Naive thymus-derived CD8-positive, alpha-beta T cell (primary cell): ENCODE measurements at regions of chr7 and their contacts with region 1.

Region 1: GRCh38 chr7:150481186-150481920 is 30.9 kb downstream of the GIMAP8 start:
- DNase-seq: peak; percentile 25 to 76 (median 63)
- ATAC-seq: peak; percentile 51 to 69
- H3K4me3 Mint-ChIP-seq: peak overlapping the region; percentile 71 to 97 (median 88)
- H3K27ac Mint-ChIP-seq: peak overlapping the region; percentile 98 to 100 (median 100)
- H3K4me1 Mint-ChIP-seq: peaks cover 57 to 98% (median 94%) of the 10 kb centered on the region in 4 donors
- H3K27me3 Mint-ChIP-seq: no peaks in the 10 kb centered on the region

Region 2: DNA sequence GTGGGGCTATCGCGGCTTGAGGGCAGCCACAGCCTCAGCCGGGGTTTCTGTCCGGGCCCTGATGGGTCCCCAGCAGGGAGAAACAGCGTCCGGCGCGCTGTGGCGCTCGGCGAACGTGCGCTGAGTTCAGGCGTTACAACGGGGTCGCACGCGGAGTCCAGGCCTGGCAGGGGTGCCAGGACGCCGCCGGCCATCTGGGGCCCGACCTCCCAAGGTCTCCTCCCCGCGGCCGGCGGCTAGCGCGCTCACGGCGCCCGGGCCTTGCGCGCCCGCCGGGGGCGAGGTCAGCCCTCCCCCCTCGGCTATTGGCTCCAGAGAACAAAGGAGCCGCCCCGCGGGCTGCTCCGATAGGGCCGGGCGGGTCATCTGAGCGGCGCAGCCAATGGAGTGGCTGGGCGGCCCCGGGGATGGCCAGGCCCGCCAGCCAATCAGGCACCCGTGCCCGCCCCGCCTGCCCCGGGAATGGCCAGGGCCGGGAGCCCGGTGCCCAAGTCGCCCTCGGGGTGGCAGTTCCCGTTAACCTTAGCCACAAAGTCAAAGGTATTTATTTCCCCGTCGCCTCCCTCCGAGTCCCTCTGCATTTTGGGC is 102.4 kb before region 1 on chr7 and contains the start of gene ZNF775:
- POLR2A ChIA-PET with region 1: no interaction called
- DNase-seq: peak; percentile 88 to 94 (median 91)
- ATAC-seq: peak; percentile 93 to 96
- H3K4me3 Mint-ChIP-seq: peak within 1 kb of the TSS; percentile 82 to 95 (median 90)
- H3K27ac Mint-ChIP-seq: peak within 1 kb of the TSS; percentile 85 to 93 (median 90)
- H3K4me1 Mint-ChIP-seq: peaks cover 27 to 65% (median 60%) of the 10 kb centered on the region in 4 donors
- H3K27me3 Mint-ChIP-seq: no peaks in the 10 kb centered on the region
- polyA plus RNA-seq, gene ZNF775: 1.5 to 7.6 (median 3.1) TPM

Region 3: GRCh38 chr7:150404805-150405583 is 76.4 kb before region 1 on chr7:
- POLR2A ChIA-PET with region 1: no interaction called
- DNase-seq: peak; percentile 62 to 82 (median 72)
- ATAC-seq: peak; percentile 80 to 81
- H3K4me3 Mint-ChIP-seq: peak overlapping the region; percentile 90 to 98 (median 98)
- H3K27ac Mint-ChIP-seq: peak overlapping the region; percentile 89 to 99 (median 98)
- H3K4me1 Mint-ChIP-seq: peaks cover 25 to 58% (median 41%) of the 10 kb centered on the region in 4 donors
- H3K27me3 Mint-ChIP-seq: no peaks in the 10 kb centered on the region

Region 4: GRCh38 chr7:150466477-150466876 is 14.9 kb before region 1 on chr7:
- POLR2A ChIA-PET with region 1: interaction called, 27 read pairs
- DNase-seq: no peak
- ATAC-seq: no peak
- H3K4me3 Mint-ChIP-seq: peak overlapping the region in 4 of 10 donors; percentile 36 to 76 (median 50)
- H3K27ac Mint-ChIP-seq: peak overlapping the region in 9 of 10 donors; percentile 17 to 95 (median 61)
- H3K4me1 Mint-ChIP-seq: peaks cover 45 to 91% (median 87%) of the 10 kb centered on the region in 4 donors
- H3K27me3 Mint-ChIP-seq: no peaks in the 10 kb centered on the region

Region 5: GRCh38 chr7:150502519-150502918 is 21.2 kb after region 1 on chr7:
- POLR2A ChIA-PET with region 1: interaction called, 114 read pairs
- DNase-seq: peak in 5 of 10 donors; percentile 13 to 81 (median 58)
- ATAC-seq: peak; percentile 84 to 98
- H3K4me3 Mint-ChIP-seq: peak overlapping the region; percentile 13 to 83 (median 70)
- H3K27ac Mint-ChIP-seq: peak overlapping the region; percentile 83 to 97 (median 92)
- H3K4me1 Mint-ChIP-seq: peaks cover 49 to 87% (median 85%) of the 10 kb centered on the region in 4 donors
- H3K27me3 Mint-ChIP-seq: no peaks in the 10 kb centered on the region

Region 6: DNA sequence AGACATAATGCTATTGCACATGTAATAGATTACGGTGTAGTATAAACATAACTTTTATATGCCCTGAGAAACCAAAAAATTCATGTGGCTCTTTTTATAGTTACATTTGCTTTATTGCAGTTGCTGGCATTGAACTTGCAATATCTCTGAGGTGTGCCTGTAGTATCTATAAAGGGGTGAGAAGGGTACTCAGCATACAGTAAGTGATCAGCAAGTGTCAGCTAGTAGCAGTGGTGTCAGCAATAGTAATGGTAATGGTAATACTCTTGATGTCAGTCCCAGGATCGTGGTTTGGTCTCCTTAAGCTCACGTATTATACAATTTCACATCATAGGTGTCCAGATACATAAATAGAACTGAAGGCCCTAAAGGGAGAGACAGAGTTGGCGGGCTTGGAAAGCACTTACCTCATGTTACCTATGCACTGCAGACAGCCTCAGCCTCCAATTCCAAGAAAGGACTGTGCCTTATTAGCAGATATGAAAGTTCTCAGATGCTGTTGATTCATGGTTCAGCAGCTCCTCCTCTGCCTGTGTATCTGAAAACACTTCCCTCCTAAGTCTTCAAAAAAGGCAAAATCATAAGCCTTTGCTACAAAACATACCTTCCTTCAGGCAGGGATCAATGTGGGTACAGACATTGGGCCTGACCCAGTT is 26.7 kb after region 1 on chr7:
- POLR2A ChIA-PET with region 1: interaction called, 504 read pairs
- DNase-seq: no peak
- ATAC-seq: peak; percentile 28 to 52
- H3K4me3 Mint-ChIP-seq: peak overlapping the region; percentile 45 to 83 (median 74)
- H3K27ac Mint-ChIP-seq: peak overlapping the region; percentile 75 to 98 (median 90)
- H3K4me1 Mint-ChIP-seq: peaks cover 63 to 96% (median 94%) of the 10 kb centered on the region in 4 donors
- H3K27me3 Mint-ChIP-seq: no peaks in the 10 kb centered on the region

Region 7: DNA sequence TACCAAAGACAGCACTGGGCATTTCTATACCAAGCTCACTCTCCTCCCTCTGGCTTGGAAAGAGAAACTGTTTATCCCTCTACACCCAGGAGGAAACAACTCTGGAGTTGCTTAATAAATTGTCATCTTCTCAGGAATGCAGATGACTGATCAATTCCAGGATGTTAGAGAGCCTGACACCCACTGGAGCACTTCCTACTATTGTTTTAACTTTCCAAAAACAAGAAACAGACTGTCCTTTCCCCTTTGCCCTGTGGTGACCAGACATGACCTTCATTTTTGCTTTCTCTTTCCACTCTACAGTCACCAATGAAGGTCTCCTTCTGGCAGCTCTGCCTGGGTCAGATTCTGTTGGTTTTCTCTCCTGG is 105.4 kb after region 1 on chr7:
- POLR2A ChIA-PET with region 1: no interaction called
- DNase-seq: no peak
- ATAC-seq: peak; percentile 12 to 41
- H3K4me3 Mint-ChIP-seq: peak overlapping the region in 8 of 10 donors; percentile 3 to 68 (median 48)
- H3K27ac Mint-ChIP-seq: peak overlapping the region; percentile 23 to 91 (median 74)
- H3K4me1 Mint-ChIP-seq: peaks cover 35 to 73% (median 60%) of the 10 kb centered on the region in 4 donors
- H3K27me3 Mint-ChIP-seq: no peaks in the 10 kb centered on the region

Region 8: GRCh38 chr7:150737265-150738055 is 256.1 kb after region 1 on chr7 and contains the start of gene GIMAP5:
- POLR2A ChIA-PET with region 1: interaction called, 11 read pairs
- DNase-seq: peak in 6 of 10 donors; percentile 27 to 60 (median 40)
- ATAC-seq: peak; percentile 67 to 76
- H3K4me3 Mint-ChIP-seq: peak within 1 kb of the TSS; percentile 88 to 100 (median 98)
- H3K27ac Mint-ChIP-seq: peak within 1 kb of the TSS; percentile 93 to 100 (median 96)
- H3K4me1 Mint-ChIP-seq: peaks cover 48 to 75% (median 68%) of the 10 kb centered on the region in 4 donors
- H3K27me3 Mint-ChIP-seq: no peaks in the 10 kb centered on the region
- polyA plus RNA-seq, gene GIMAP5: 320 to 506 (median 401) TPM

Region 9: DNA sequence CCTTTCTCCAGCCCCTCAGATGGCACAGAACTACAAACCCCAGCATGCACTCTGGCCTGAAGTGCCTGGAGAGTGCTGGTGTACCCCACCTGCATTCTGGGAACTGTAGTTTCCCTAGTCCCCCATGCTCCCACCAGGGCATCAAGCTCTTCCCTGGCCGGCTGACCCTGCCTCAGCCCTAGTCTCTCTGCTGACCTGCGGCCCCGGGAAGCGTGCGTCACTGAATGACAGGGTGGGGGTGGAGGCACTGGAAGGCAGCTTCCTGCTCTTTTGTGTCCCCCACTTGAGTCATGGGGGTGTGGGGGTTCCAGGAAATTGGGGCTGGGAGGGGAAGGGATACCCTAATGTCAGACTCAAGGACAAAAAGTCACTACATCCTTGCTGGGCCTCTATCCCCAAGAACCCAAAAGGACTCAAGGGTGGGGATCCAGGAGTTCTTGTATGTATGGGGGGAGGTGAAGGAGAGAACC is 511.5 kb after region 1 on chr7:
- POLR2A ChIA-PET with region 1: no interaction called
- DNase-seq: no peak
- ATAC-seq: peak in 1 of 2 donors; percentile 41
- H3K4me3 Mint-ChIP-seq: no peak overlapping the region
- H3K27ac Mint-ChIP-seq: peak overlapping the region in 5 of 10 donors; percentile 3 to 60 (median 46)
- H3K4me1 Mint-ChIP-seq: peaks cover 18 to 53% (median 40%) of the 10 kb centered on the region in 4 donors
- H3K27me3 Mint-ChIP-seq: peaks cover 0 to 11% (median 0%) of the 10 kb centered on the region in 5 donors